CD4-positive, alpha-beta T cell (primary cell): ENCODE measurements at regions of chr9 and their contacts with region 1.

Region 1: DNA sequence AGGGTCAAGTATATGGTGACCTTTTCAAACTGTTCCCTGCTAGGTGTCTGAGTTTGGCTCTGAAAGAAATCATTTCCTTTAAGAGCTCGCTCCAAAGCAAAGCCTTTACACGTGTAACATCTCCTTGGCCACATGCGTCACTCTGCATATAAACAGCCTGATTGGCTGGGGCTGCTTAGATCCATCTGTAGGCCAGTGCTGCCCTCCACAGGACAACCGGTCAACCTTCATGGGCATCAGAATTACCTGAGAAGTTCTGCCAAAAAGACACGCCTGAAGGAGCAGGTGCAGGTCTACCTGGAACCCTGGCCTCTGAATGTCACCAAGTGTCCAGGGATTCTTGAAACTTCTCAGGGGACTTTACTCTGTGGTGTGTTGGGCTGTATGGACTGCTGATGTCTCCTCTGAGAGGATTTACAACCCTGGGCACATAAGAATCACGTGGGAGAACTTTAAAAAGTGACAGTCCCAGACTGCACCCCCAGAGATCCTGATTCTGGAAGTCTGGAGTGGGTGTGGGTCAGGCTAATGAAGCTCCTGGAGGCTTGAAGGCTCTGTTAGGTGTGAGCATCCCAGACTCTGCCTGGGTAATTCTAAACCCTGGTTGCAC is 497.6 kb downstream of the GADD45G start:
- DNase-seq: peak; percentile 58 to 91 (median 71)
- ATAC-seq: peak; percentile 100
- H3K4me3 ChIP-seq: no peak overlapping the region
- H3K4me3 Mint-ChIP-seq: no peak overlapping the region
- H3K27ac ChIP-seq: no peak overlapping the region
- H3K27ac Mint-ChIP-seq: no peak overlapping the region
- H3K4me1 ChIP-seq: peaks cover 3% of the 10 kb centered on the region
- H3K4me1 Mint-ChIP-seq: peaks cover 7% of the 10 kb centered on the region
- H3K27me3 ChIP-seq: peaks cover 0 to 4% of the 10 kb centered on the region in 2 experiments
- H3K27me3 Mint-ChIP-seq: peaks cover 6% of the 10 kb centered on the region
- CTCF ChIP-seq: peak; percentile 65

Region 2: GRCh38 chr9:89318123-89319014 is 784.0 kb before region 1 on chr9 and contains the start of gene SECISBP2:
- CTCF ChIA-PET with region 1: no interaction called
- POLR2A ChIA-PET with region 1: no interaction called
- intact Hi-C with region 1: loop called in 1 of 2 experiments (anchors 10 kb)
- DNase-seq: peak; percentile 85 to 97 (median 90)
- ATAC-seq: peak; percentile 87
- H3K4me3 ChIP-seq: peak within 1 kb of the TSS; percentile 69
- H3K4me3 Mint-ChIP-seq: peak within 1 kb of the TSS; percentile 88
- H3K27ac ChIP-seq: peak within 1 kb of the TSS; percentile 97 to 99
- H3K27ac Mint-ChIP-seq: peak within 1 kb of the TSS; percentile 94
- H3K4me1 ChIP-seq: peaks cover 22% of the 10 kb centered on the region
- H3K4me1 Mint-ChIP-seq: peaks cover 77% of the 10 kb centered on the region
- H3K27me3 ChIP-seq: no peaks in the 10 kb centered on the region
- H3K27me3 Mint-ChIP-seq: no peaks in the 10 kb centered on the region
- CTCF ChIP-seq: no peak
- total RNA-seq, gene SECISBP2: 109 to 112 TPM

Region 3: DNA sequence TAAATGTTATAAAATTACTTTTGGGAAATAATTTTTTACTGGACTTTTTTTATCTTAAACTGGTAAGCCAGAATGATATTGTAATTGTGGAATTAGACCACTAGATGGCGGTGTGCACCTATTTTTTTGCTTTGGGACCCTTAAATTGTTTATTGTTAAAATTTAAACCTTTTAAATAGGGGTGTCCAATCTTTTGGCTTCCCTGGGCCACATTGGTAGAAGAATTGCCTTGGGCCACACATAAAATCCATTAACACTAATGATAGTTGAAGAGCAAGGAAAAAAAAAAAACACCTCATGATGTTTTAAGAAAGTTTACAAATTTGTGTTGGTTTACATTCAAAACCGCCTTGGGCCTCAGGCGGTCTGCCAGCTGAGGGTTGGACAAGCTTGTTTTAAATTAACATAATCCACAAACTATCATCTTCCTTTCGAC is 526.0 kb before region 1 on chr9:
- CTCF ChIA-PET with region 1: no interaction called
- POLR2A ChIA-PET with region 1: no interaction called
- intact Hi-C with region 1: loop called (anchors 1 to 2 kb)
- DNase-seq: peak in 4 of 14 experiments; percentile 47 to 70 (median 54)
- ATAC-seq: no peak
- H3K4me3 ChIP-seq: no peak overlapping the region
- H3K4me3 Mint-ChIP-seq: no peak overlapping the region
- H3K27ac ChIP-seq: no peak overlapping the region
- H3K27ac Mint-ChIP-seq: no peak overlapping the region
- H3K4me1 ChIP-seq: peaks cover 11% of the 10 kb centered on the region
- H3K4me1 Mint-ChIP-seq: peaks cover 13% of the 10 kb centered on the region
- H3K27me3 ChIP-seq: peaks cover 12 to 13% of the 10 kb centered on the region in 2 experiments
- H3K27me3 Mint-ChIP-seq: peaks cover 54% of the 10 kb centered on the region
- CTCF ChIP-seq: peak; percentile 90

Region 4: DNA sequence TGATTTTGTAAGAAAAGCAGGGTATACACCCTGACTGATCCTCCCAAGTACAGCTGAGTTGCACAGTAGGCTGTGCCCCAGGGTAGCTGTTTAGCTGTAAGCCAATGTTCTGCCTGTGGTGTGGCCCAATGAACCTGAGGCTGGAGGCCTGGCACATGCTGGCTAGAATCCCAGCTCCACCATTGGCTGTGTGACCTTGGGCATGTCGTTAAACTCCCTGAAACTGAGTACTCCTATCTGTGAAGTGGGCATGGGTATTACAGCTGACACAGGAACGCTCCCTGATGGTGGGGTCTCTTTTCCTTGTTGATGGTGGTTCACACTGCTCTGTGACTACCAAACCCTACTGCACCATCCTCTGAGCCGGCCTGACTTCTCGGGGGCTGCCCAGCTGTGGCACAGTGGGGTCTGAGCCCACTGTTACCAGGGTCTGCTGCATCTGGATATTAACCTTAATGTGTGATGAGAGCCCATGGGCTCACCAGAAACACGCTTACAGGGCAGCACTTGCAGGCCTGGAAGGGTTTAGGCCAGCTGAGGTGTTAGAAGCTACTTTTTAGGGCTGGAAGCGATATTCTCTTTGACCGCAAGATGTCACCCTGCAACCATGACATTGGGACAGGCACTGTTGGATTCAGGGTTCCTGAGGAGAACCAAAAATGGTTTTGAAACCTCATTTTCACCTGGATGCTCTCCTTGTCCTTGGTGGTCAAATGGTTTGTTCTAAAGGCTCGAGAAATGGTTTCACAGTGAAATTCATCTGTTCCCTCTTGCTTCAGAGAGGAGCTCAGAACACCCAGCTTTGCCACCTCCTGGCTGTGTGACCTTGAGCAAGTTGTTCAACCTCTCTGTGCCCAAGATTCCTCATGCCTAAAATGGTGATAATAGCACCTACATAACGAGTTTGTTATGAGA is 504.4 kb before region 1 on chr9:
- CTCF ChIA-PET with region 1: interaction called, 8 read pairs
- POLR2A ChIA-PET with region 1: interaction called, 27 read pairs
- intact Hi-C with region 1: loop called (anchors 1 kb)
- DNase-seq: peak in 13 of 14 experiments; percentile 27 to 81 (median 44)
- ATAC-seq: peak; percentile 42
- H3K4me3 ChIP-seq: no peak overlapping the region
- H3K4me3 Mint-ChIP-seq: no peak overlapping the region
- H3K27ac ChIP-seq: no peak overlapping the region
- H3K27ac Mint-ChIP-seq: no peak overlapping the region
- H3K4me1 ChIP-seq: peaks cover 5% of the 10 kb centered on the region
- H3K4me1 Mint-ChIP-seq: peaks cover 2% of the 10 kb centered on the region
- H3K27me3 ChIP-seq: peaks cover 0 to 4% of the 10 kb centered on the region in 2 experiments
- H3K27me3 Mint-ChIP-seq: no peaks in the 10 kb centered on the region
- CTCF ChIP-seq: peak; percentile 68

Region 5: GRCh38 chr9:89919169-89919681 is 183.2 kb before region 1 on chr9:
- CTCF ChIA-PET with region 1: no interaction called
- POLR2A ChIA-PET with region 1: no interaction called
- intact Hi-C with region 1: loop called in 1 of 2 experiments (anchors 5 kb)
- DNase-seq: peak in 10 of 14 experiments; percentile 4 to 64 (median 11)
- ATAC-seq: peak; percentile 68
- H3K4me3 ChIP-seq: no peak overlapping the region
- H3K4me3 Mint-ChIP-seq: no peak overlapping the region
- H3K27ac ChIP-seq: no peak overlapping the region
- H3K27ac Mint-ChIP-seq: no peak overlapping the region
- H3K4me1 ChIP-seq: peaks cover 4% of the 10 kb centered on the region
- H3K4me1 Mint-ChIP-seq: peaks cover 9% of the 10 kb centered on the region
- H3K27me3 ChIP-seq: no peaks in the 10 kb centered on the region
- H3K27me3 Mint-ChIP-seq: peaks cover 26% of the 10 kb centered on the region
- CTCF ChIP-seq: no peak